H1 (cell line): ENCODE measurements at regions of chr15 and their contacts with region 1.

Region 1: DNA sequence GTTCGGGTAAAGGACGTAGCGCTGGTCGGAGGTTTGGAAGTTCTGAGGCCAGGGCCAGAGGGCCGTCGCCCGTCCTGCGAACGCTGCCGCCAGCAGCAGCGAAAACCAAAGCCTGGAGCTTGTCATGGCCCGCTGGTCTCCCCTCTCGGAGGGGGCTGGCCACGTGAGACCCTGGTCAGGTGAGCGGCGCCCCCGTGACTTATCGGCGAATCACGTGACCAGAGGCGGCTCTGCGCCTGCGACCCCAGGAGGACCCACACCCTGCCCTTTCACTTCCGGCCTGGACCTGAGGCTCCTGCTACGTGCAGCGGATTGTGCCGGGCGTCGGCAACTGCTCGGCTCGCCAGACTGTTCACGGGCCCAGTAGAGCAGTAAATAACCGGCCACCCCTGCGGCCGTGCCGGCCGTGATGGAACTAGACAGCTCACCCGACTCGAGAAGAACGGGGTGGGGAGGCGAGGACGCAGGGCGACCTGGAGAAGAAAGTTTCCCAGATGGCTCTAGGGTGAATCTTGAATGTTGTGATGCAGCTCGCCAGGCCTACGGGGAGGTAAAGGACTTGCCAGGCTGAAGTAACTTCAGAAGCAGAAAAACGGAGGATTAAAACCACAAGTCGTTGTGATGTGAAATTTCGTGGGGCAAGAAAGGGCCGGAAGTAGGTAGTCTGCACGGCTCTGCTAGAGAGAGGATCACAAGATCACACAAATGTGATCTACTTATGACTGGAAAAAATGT is at the start of gene HEXA:
- DNase-seq: peak; percentile 94 to 100
- H3K4me3 ChIP-seq: peak within 1 kb of the TSS; percentile 84 to 99 (median 91)
- H3K27ac ChIP-seq: peak within 1 kb of the TSS; percentile 66
- H3K4me1 ChIP-seq: peaks cover 0 to 4% (median 0%) of the 10 kb centered on the region in 4 experiments; a peak in 2 of 7 replicates
- H3K27me3 ChIP-seq: no peaks in the 10 kb centered on the region
- CTCF ChIP-seq: no peak
- EP300 ChIP-seq: peak in 1 of 2 experiments; percentile 96; a peak in 2 of 3 replicates
- POLR2A ChIP-seq: peak; percentile 93 to 98
- RAD21 ChIP-seq: peak in 1 of 2 experiments; percentile 21; a peak in 3 of 4 replicates
- total RNA-seq, gene HEXA: 47.4 and 52.5 TPM in 2 replicates

Region 2: GRCh38 chr15:72365844-72366243 is 10.2 kb before region 1 on chr15:
- CTCF ChIA-PET with region 1: interaction called, 3 read pairs
- POLR2A ChIA-PET with region 1: interaction called, 10 read pairs
- DNase-seq: no peak
- H3K4me3 ChIP-seq: no peak overlapping the region
- H3K27ac ChIP-seq: no peak overlapping the region
- H3K4me1 ChIP-seq: no peaks in the 10 kb centered on the region
- H3K27me3 ChIP-seq: no peaks in the 10 kb centered on the region
- CTCF ChIP-seq: no peak
- EP300 ChIP-seq: no peak
- POLR2A ChIP-seq: no peak
- RAD21 ChIP-seq: no peak

Region 3: GRCh38 chr15:72426753-72427152 is 50.7 kb after region 1 on chr15:
- CTCF ChIA-PET with region 1: no interaction called
- POLR2A ChIA-PET with region 1: no interaction called
- DNase-seq: no peak
- H3K4me3 ChIP-seq: no peak overlapping the region
- H3K27ac ChIP-seq: no peak overlapping the region
- H3K4me1 ChIP-seq: no peaks in the 10 kb centered on the region
- H3K27me3 ChIP-seq: no peaks in the 10 kb centered on the region
- CTCF ChIP-seq: no peak
- EP300 ChIP-seq: no peak
- POLR2A ChIP-seq: no peak
- RAD21 ChIP-seq: no peak